A673 (cell line): ENCODE measurements at regions of chr1 and their contacts with region 1.

Region 1: GRCh38 chr1:212857992-212858460 is at the start of gene FLVCR1:
- DNase-seq: peak; percentile 98
- H3K4me3 ChIP-seq: peak within 1 kb of the TSS; percentile 85
- H3K27ac ChIP-seq: peak within 1 kb of the TSS; percentile 89
- H3K4me1 ChIP-seq: peaks cover 8% of the 10 kb centered on the region
- H3K27me3 ChIP-seq: no peaks in the 10 kb centered on the region
- CTCF ChIP-seq: no peak
- total RNA-seq, gene FLVCR1: 20.7 and 26.4 TPM in 2 replicates

Region 2: DNA sequence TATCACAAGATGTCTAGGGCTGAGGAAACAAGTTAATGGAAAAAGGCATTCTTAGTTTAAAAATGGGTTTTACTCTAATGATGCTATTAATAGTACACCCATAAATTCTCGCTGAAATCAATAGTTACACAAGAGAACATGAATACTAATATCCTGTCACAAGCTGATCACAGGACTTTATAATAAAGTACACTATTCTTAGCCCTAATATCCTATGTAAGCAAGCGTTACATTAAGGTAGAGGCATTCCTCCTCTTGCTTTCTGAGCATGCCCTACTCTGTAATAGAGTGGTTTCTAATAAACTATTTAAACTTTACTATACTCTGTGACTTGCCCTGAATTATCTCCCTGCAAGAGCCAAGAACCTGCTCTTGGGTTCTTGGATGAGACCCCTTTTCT is 436.9 kb before region 1 on chr1:
- CTCF ChIA-PET with region 1: no interaction called
- POLR2A ChIA-PET with region 1: no interaction called
- intact Hi-C with region 1: no loop called
- DNase-seq: no peak
- H3K4me3 ChIP-seq: no peak overlapping the region
- H3K27ac ChIP-seq: no peak overlapping the region
- H3K4me1 ChIP-seq: no peaks in the 10 kb centered on the region
- H3K27me3 ChIP-seq: no peaks in the 10 kb centered on the region
- CTCF ChIP-seq: no peak

Region 3: DNA sequence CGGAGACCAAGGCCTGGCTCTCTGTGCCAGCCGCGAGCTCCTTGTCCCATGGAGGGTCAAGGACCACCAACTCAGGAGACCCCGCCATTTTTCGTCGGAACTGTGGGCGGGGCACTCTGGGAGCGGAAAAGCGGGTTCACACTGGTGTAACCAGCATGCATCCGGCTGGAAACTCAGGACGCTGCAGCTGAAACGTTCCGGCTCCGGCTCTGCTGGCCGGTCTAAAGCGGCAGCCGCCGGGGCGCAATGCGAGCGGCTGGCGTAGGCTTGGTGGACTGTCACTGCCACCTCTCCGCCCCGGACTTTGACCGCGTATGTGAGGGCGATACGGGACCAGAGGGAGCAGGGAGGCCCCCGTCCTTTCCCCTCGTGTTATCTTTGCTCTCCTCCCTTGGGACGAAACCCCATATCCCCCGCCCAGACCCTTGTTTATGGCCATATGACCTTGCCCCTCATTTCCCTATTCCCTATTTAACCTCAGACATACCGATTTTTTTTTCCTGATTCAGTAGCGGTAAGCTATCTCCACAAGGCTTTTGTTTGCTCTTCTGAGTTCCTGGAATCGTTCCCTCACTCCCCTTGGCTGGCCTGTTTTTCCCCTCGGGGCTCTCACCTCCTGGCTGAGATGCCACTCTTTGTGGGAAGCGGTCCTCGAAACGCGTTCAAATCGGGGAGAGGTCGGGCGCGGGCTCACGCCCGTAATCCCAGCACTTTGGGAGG is 66.2 kb before region 1 on chr1 and contains the starts of genes NSL1 and TATDN3:
- CTCF ChIA-PET with region 1: interaction called, 3 read pairs
- POLR2A ChIA-PET with region 1: no interaction called
- intact Hi-C with region 1: loop called (anchors 5 kb)
- DNase-seq: peak; percentile 95
- H3K4me3 ChIP-seq: peak within 1 kb of the TSS; percentile 80
- H3K27ac ChIP-seq: peak within 1 kb of the TSS; percentile 81
- H3K4me1 ChIP-seq: peaks cover 4% of the 10 kb centered on the region
- H3K27me3 ChIP-seq: no peaks in the 10 kb centered on the region
- CTCF ChIP-seq: no peak
- total RNA-seq, gene NSL1: 48.5 and 53.6 TPM in 2 replicates
- total RNA-seq, gene TATDN3: 17.3 and 22.6 TPM in 2 replicates